K562 (cell line): ENCODE measurements at regions of chr1 and their contacts with region 1.

Region 1: GRCh38 chr1:201042779-201043461 is 19.4 kb upstream of the KIF21B start:
- DNase-seq: peak; percentile 73 to 78 (median 76)
- ATAC-seq: peak; percentile 92
- H3K4me3 ChIP-seq: no peak overlapping the region
- H3K27ac ChIP-seq: no peak overlapping the region
- H3K4me1 ChIP-seq: no peaks in the 10 kb centered on the region
- H3K27me3 ChIP-seq: peaks cover 0 to 15% of the 10 kb centered on the region in 2 experiments; a peak in 3 of 5 replicates
- CTCF ChIP-seq: peak; percentile 91 to 97 (median 95)
- EP300 ChIP-seq: no peak
- POLR2A ChIP-seq: no peak
- RAD21 ChIP-seq: peak; percentile 98 to 99

Region 2: DNA sequence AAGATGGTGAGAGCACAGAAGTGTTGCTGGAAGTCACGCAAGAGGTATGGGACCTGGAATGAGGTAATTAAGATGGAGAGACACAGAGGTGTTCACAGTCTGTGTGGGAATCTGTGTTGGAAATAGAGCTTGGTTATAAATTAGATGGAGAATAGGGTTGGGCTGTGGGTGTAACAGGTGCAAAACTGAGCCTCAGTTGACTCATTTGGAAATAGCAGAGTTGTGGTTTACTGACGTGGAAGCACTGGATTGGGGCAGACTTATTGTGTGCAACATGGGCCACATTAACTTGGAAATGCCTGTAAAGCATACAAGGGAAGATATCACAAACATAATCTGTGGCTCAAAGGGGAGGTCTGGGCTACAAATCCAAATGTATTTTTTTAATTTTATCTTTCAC is 291.2 kb before region 1 on chr1:
- CTCF ChIA-PET with region 1: no interaction called
- POLR2A ChIA-PET with region 1: no interaction called
- in situ Hi-C with region 1: no loop called
- intact Hi-C with region 1: no loop called
- DNase-seq: no peak
- ATAC-seq: no peak
- H3K4me3 ChIP-seq: no peak overlapping the region
- H3K27ac ChIP-seq: no peak overlapping the region
- H3K4me1 ChIP-seq: peaks cover 0 to 4% of the 10 kb centered on the region in 2 experiments; a peak in 1 of 5 replicates
- H3K27me3 ChIP-seq: no peaks in the 10 kb centered on the region
- CTCF ChIP-seq: no peak
- EP300 ChIP-seq: no peak
- POLR2A ChIP-seq: no peak
- RAD21 ChIP-seq: no peak

Region 3: GRCh38 chr1:200979574-200980451 is 63.1 kb before region 1 on chr1:
- CTCF ChIA-PET with region 1: interaction called, 15 read pairs
- POLR2A ChIA-PET with region 1: interaction called, 3 read pairs
- in situ Hi-C with region 1: loop called (anchors 5 kb)
- intact Hi-C with region 1: loop called (anchors 1 kb)
- DNase-seq: peak; percentile 83 to 95 (median 92)
- ATAC-seq: peak; percentile 98
- H3K4me3 ChIP-seq: no peak overlapping the region
- H3K27ac ChIP-seq: no peak overlapping the region
- H3K4me1 ChIP-seq: peaks cover 0 to 4% of the 10 kb centered on the region in 2 experiments; a peak in 1 of 5 replicates
- H3K27me3 ChIP-seq: no peaks in the 10 kb centered on the region
- CTCF ChIP-seq: peak; percentile 90 to 97 (median 93)
- EP300 ChIP-seq: no peak
- POLR2A ChIP-seq: no peak
- RAD21 ChIP-seq: peak; percentile 66 to 97

Region 4: GRCh38 chr1:201001960-201002359 is 41.0 kb before region 1 on chr1:
- CTCF ChIA-PET with region 1: no interaction called
- POLR2A ChIA-PET with region 1: no interaction called
- in situ Hi-C with region 1: no loop called
- intact Hi-C with region 1: no loop called
- DNase-seq: no peak
- ATAC-seq: no peak
- H3K4me3 ChIP-seq: no peak overlapping the region
- H3K27ac ChIP-seq: no peak overlapping the region
- H3K4me1 ChIP-seq: peaks cover 0 to 9% of the 10 kb centered on the region in 2 experiments; a peak in 2 of 5 replicates
- H3K27me3 ChIP-seq: no peaks in the 10 kb centered on the region
- CTCF ChIP-seq: no peak
- EP300 ChIP-seq: no peak
- POLR2A ChIP-seq: no peak
- RAD21 ChIP-seq: no peak

Region 5: DNA sequence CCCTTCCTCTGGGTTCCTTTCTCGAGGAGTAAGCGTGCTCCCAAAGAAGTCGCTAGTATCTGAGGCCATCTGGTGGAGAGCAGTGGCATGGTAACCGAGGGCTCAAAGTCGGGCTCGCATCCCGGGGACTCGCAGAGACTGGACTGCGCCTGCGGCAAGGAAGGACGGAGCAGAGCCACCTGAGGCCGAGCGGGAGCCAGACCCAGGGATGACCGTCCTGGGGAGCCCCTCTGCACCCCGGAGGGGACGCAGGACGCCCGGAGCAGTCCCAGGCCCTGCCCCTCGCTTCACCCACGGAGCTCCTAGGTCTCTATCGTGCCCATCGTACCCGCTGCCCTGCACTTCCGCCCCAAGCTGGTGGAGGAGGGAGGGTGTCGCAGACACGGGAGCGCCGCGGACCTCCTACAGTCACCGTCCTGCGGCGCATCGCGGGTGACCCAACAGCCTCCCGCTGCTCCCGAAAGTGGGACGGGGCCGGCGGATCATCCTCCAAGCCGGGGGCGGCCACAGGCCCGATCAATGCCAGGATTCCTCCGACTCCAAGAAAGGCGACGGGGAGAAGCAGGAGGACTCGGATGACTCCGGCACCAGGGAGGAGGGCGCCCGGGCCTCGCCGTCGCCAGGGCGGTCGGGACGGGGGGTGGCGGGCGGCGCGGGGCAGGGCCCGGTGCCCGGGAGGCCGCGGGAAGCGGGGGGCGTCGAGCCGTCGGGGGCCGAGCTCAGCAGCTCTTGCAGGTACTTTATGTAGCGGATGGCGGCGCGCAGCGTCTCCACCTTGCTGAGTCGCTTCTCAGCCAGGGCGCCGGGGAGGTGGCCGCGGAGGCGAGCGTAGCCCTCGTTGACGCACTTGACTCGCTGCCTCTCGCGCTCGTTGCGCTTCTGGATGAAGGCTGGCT is 71.6 kb after region 1 on chr1:
- CTCF ChIA-PET with region 1: no interaction called
- POLR2A ChIA-PET with region 1: no interaction called
- in situ Hi-C with region 1: no loop called
- intact Hi-C with region 1: loop called (anchors 10 kb)
- DNase-seq: peak; percentile 83 to 85 (median 84)
- ATAC-seq: peak; percentile 98
- H3K4me3 ChIP-seq: no peak overlapping the region
- H3K27ac ChIP-seq: no peak overlapping the region
- H3K4me1 ChIP-seq: peaks cover 0 to 7% of the 10 kb centered on the region in 2 experiments; a peak in 2 of 5 replicates
- H3K27me3 ChIP-seq: peaks cover 20 to 51% of the 10 kb centered on the region in 2 experiments; a peak in 4 of 5 replicates
- CTCF ChIP-seq: peak; percentile 85 to 91 (median 90)
- EP300 ChIP-seq: no peak
- POLR2A ChIP-seq: no peak
- RAD21 ChIP-seq: peak; percentile 82 to 93